T-cell (primary cell): ENCODE measurements at regions of chr3 and their contacts with region 1.

Region 1: DNA sequence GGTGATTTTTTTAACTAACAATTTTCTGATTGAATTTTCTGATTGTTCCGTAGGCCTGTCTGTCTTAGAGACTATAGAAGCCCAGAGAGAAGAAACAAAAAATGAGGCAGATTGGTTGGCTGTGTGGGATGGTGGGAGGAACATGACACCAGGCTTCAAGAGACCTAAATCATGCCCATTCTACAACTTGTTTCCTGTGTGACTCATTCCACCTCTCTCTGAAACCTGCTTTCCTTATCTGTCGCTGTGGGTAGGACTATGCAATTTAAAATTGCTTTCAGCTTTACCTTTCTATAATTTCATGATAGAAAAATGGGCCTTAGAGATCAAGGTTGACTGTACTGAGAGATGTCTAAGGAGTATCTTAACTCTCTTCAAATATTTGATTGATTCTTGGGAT is 44.5 kb downstream of the OXNAD1 start:
- DNase-seq: peak in 21 of 35 experiments; percentile 24 to 81 (median 42)
- ATAC-seq: peak; percentile 69 to 85 (median 84)
- H3K4me3 ChIP-seq: no peak overlapping the region
- H3K4me3 Mint-ChIP-seq: peak overlapping the region; percentile 74 to 88 (median 80)
- H3K27ac ChIP-seq: peak overlapping the region; percentile 77
- H3K27ac Mint-ChIP-seq: peak overlapping the region; percentile 98 to 99
- H3K4me1 ChIP-seq: peaks cover 72 to 88% of the 10 kb centered on the region in 2 experiments
- H3K4me1 Mint-ChIP-seq: peaks cover 92 to 93% (median 93%) of the 10 kb centered on the region in 3 donors
- H3K27me3 ChIP-seq: no peaks in the 10 kb centered on the region
- H3K27me3 Mint-ChIP-seq: no peaks in the 10 kb centered on the region

Region 2: DNA sequence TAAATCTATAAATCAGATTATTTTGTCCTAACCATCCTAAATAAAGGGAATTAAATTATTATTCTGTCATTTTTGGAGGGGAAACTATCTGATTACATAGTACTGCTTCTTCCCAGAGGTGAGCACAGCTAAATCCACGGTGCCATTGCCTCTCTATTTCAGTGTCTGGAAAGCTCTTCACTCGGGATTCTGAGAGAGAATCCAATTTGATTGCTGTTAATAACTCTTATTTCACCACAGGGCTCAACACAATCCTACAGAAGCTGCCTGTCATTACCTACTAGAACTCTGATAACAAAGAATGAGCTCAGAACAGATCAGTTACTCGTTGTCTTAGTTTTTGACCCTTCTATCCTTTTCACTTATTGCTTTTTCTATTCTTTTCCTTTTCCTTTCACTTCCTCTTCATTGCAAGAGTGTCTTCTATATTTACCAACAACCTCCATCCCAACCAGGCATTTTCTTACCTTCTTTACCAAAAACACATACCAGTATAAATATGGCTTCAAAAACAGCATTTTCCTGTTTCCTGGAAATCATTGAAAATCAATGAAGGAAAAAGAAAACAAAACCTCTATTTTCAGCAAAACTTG is 14.2 kb before region 1 on chr3:
- CTCF ChIA-PET with region 1: interaction called, 12 to 49 read pairs
- POLR2A ChIA-PET with region 1: interaction called, 7 to 9 read pairs
- DNase-seq: no peak
- ATAC-seq: no peak
- H3K4me3 ChIP-seq: peak overlapping the region in 1 of 2 donors; percentile 17
- H3K4me3 Mint-ChIP-seq: peak overlapping the region; percentile 59 to 88 (median 64)
- H3K27ac ChIP-seq: peak overlapping the region; percentile 49
- H3K27ac Mint-ChIP-seq: peak overlapping the region; percentile 89 to 98
- H3K4me1 ChIP-seq: peaks cover 38 to 78% of the 10 kb centered on the region in 2 experiments
- H3K4me1 Mint-ChIP-seq: peaks cover 92 to 94% (median 92%) of the 10 kb centered on the region in 3 donors
- H3K27me3 ChIP-seq: no peaks in the 10 kb centered on the region
- H3K27me3 Mint-ChIP-seq: no peaks in the 10 kb centered on the region

Region 3: DNA sequence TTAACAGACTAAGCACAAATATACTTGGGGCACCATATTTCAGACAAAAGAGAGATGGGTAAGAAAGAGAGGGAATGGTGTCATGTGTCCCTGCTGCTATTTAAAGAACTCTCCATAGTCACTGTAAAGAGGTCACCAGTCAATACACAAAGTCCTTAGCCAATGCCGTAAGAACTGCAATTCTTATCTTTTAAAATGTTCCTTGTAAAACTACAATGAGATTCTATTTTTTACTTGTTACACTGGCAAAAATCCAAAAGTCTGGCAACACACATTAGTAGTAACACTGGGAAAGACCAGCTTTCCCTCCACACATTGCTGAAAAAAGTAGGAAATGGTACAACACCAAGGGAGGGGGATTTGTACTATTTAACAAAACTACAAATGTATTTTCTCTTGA is 1243.5 kb after region 1 on chr3:
- CTCF ChIA-PET with region 1: no interaction called
- POLR2A ChIA-PET with region 1: no interaction called
- DNase-seq: no peak
- ATAC-seq: no peak
- H3K4me3 ChIP-seq: no peak overlapping the region
- H3K4me3 Mint-ChIP-seq: no peak overlapping the region
- H3K27ac ChIP-seq: no peak overlapping the region
- H3K27ac Mint-ChIP-seq: no peak overlapping the region
- H3K4me1 ChIP-seq: no peaks in the 10 kb centered on the region
- H3K4me1 Mint-ChIP-seq: peaks cover 0 to 5% (median 0%) of the 10 kb centered on the region in 3 donors
- H3K27me3 ChIP-seq: no peaks in the 10 kb centered on the region
- H3K27me3 Mint-ChIP-seq: no peaks in the 10 kb centered on the region